Activated CD4-positive, alpha-beta memory T cell treated with anti-CD3 and anti-CD28 coated beads, Interleukin-2, amount 10 ng/mL, durations not matched to agents 7 days and 5 days (primary cell): ENCODE measurements at regions of chr10 and their contacts with region 1.

Region 1: GRCh38 chr10:32256613-32257437 is 90.1 kb downstream of the EPC1 start:
- DNase-seq: peak; percentile 77
- H3K4me3 Mint-ChIP-seq: no peak overlapping the region
- H3K27ac Mint-ChIP-seq: no peak overlapping the region
- H3K4me1 Mint-ChIP-seq: peaks cover 27% of the 10 kb centered on the region
- H3K27me3 Mint-ChIP-seq: no peaks in the 10 kb centered on the region

Region 2: GRCh38 chr10:32244421-32245207 is 12.2 kb before region 1 on chr10:
- CTCF ChIA-PET with region 1: interaction called, 11 read pairs
- POLR2A ChIA-PET with region 1: interaction called, 8 read pairs
- DNase-seq: peak; percentile 38
- H3K4me3 Mint-ChIP-seq: no peak overlapping the region
- H3K27ac Mint-ChIP-seq: peak overlapping the region; percentile 47
- H3K4me1 Mint-ChIP-seq: peaks cover 27% of the 10 kb centered on the region
- H3K27me3 Mint-ChIP-seq: no peaks in the 10 kb centered on the region

Region 3: DNA sequence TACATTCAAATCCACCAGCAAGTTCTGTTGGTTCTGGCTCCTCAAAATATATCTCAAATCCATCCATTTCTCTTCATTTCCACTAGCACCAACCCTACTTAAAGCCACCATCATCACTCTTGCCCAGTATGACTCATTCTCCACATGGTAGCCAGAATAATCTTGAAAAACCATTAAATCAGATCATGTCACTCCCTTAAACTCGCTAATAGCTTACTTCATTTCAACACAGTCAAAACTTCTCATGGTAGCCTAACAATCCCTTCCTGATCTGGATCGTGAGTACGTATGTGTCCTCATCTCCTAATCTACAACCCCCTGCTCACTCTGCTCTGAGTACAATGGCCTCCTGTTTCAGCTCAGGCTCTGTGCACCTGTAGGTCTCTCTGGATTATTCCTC is 81.4 kb after region 1 on chr10:
- CTCF ChIA-PET with region 1: interaction called, 10 read pairs
- POLR2A ChIA-PET with region 1: interaction called, 3 read pairs
- DNase-seq: no peak
- H3K4me3 Mint-ChIP-seq: no peak overlapping the region
- H3K27ac Mint-ChIP-seq: no peak overlapping the region
- H3K4me1 Mint-ChIP-seq: peaks cover 85% of the 10 kb centered on the region
- H3K27me3 Mint-ChIP-seq: no peaks in the 10 kb centered on the region

Region 4: DNA sequence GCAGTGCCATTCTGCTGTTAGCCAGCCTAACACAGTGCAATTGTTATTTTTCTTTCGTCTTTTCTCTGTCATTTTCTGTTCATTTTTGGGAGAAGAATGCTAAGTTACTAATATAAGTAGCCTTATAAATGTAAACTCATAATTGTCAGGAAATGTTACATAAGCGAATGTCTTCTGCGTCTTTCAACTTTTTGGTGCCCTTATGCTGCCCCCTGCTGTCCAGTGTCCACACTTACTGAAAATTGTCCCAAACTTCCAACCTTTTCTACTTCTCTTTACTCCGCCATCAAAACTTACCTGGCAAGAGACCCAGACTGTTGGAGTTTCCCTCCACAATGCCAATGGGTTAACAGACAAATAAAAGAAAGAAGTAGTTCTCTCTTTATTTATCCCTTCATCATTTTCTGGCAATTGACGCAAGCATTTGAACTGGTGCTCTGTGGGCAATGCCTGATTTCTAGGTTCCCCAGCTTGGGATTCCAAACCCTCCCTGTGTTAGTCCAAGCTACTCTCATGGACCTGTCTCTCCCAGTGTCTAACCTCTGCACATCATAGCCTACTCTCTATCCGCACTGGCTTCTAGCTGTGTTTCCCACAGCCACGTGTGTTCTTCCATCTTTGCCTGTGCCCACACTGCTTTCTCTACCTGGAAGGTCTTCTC is 111.1 kb after region 1 on chr10:
- CTCF ChIA-PET with region 1: interaction called, 28 read pairs
- POLR2A ChIA-PET with region 1: interaction called, 3 read pairs
- DNase-seq: peak; percentile 77
- H3K4me3 Mint-ChIP-seq: no peak overlapping the region
- H3K27ac Mint-ChIP-seq: peak overlapping the region; percentile 4
- H3K4me1 Mint-ChIP-seq: peaks cover 40% of the 10 kb centered on the region
- H3K27me3 Mint-ChIP-seq: no peaks in the 10 kb centered on the region